ENCODE measurements at regions of chr2 and their contacts with region 1.

Region 1: GRCh38 chr2:11129598-11130449 is 25.4 kb upstream of the SLC66A3 start:
- DNase-seq: peak; percentile 76 to 97
- H3K4me3 ChIP-seq: peak overlapping the region; percentile 32 to 56 (median 46); a peak in 7 of 8 replicates
- H3K27ac ChIP-seq: no peak overlapping the region
- H3K4me1 ChIP-seq: peaks cover 3 to 11% (median 6%) of the 10 kb centered on the region in 4 experiments
- H3K27me3 ChIP-seq: no peaks in the 10 kb centered on the region; a peak in 2 of 7 replicates
- CTCF ChIP-seq: peak; percentile 58 to 72 (median 67)
- EP300 ChIP-seq: peak in 1 of 2 experiments; percentile 54; a peak in 1 of 3 replicates
- POLR2A ChIP-seq: no peak
- RAD21 ChIP-seq: peak; percentile 74 to 80

Region 2: GRCh38 chr2:11103984-11104793 is 25.6 kb before region 1 on chr2:
- CTCF ChIA-PET with region 1: interaction called, 84 read pairs
- POLR2A ChIA-PET with region 1: no interaction called
- DNase-seq: no peak
- H3K4me3 ChIP-seq: no peak overlapping the region
- H3K27ac ChIP-seq: no peak overlapping the region
- H3K4me1 ChIP-seq: no peaks in the 10 kb centered on the region
- H3K27me3 ChIP-seq: no peaks in the 10 kb centered on the region
- CTCF ChIP-seq: no peak
- EP300 ChIP-seq: no peak
- POLR2A ChIP-seq: no peak
- RAD21 ChIP-seq: no peak

Region 3: DNA sequence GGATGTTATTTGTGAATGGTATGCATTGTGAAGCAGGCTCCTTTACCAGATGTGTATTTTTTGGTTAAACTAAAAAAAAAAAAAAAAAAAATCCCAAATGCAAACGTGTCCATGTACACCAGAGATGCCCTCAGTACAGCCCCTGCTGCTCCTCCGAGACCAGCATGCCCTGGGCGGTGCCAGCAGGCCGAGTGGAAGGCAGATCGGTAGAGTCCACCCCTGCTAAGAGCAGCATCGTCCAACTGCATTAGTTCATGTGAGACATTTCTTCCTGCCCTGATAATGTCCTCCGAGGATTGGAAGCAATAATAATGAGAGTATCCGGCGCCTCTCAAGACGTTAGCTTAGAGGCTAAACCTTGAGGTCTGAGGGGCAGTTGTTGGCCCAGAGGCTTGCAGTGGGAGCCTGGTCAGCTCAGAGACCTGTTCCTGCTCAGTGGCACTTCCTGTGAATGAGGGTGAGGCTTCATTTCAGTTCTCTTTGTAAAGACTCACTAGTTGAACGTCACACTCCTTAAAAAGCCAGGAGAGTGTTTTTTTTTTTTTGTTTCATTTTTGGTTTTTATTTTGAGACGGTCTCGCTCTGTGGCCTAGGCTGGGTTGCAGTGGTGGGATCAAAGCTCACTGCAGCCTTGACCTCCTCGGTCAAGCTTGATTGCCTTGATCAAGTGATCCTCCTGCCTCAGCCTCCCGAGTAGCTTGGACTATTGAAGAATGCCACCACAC is 31.1 kb after region 1 on chr2:
- CTCF ChIA-PET with region 1: interaction called, 111 read pairs
- POLR2A ChIA-PET with region 1: interaction called, 20 read pairs
- DNase-seq: no peak
- H3K4me3 ChIP-seq: no peak overlapping the region
- H3K27ac ChIP-seq: no peak overlapping the region
- H3K4me1 ChIP-seq: peaks cover 0 to under 1% (median 0%) of the 10 kb centered on the region in 4 experiments; a peak in 1 of 7 replicates
- H3K27me3 ChIP-seq: peaks cover 0 to 5% (median 2%) of the 10 kb centered on the region in 4 experiments; a peak in 3 of 7 replicates
- CTCF ChIP-seq: no peak
- EP300 ChIP-seq: no peak
- POLR2A ChIP-seq: no peak
- RAD21 ChIP-seq: no peak

Region 4: GRCh38 chr2:11398747-11399437 is 269.1 kb after region 1 on chr2:
- CTCF ChIA-PET with region 1: interaction called, 21 read pairs
- POLR2A ChIA-PET with region 1: no interaction called
- DNase-seq: no peak
- H3K4me3 ChIP-seq: no peak overlapping the region
- H3K27ac ChIP-seq: no peak overlapping the region
- H3K4me1 ChIP-seq: peaks cover 0 to 5% (median 0%) of the 10 kb centered on the region in 4 experiments; a peak in 2 of 7 replicates
- H3K27me3 ChIP-seq: no peaks in the 10 kb centered on the region
- CTCF ChIP-seq: no peak
- EP300 ChIP-seq: no peak
- POLR2A ChIP-seq: no peak
- RAD21 ChIP-seq: no peak

Region 5: DNA sequence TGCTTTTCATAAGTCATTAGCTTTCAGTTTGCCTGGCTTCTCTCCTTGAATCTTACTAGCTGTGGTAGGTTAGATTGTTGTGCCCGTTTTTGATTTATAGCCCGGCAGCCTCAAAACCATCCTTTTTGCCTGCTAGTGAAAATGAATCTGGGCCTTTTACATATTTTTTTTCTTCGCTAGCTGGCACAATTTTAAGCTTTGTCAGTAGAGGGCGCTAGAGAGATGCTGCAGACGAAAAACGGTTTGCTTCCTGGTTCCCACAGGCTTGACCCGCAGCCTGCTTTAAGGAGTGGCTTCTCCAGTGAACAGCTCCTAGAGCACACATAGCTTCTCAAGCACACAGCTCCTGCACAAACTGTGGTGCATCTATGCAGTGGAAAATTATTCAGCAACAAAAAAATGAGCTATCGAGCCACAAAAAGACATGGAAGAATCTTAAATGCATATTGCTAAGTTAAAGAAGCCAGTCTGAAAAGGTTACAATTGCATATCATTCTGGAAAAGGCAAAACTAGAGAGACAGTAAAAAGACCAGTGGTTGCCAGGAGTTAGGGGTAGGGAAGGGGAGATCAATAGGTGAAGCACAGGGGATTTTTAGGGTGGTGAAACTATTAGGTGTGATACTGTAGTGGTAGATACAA is 288.2 kb after region 1 on chr2:
- CTCF ChIA-PET with region 1: interaction called, 54 read pairs
- POLR2A ChIA-PET with region 1: no interaction called
- DNase-seq: no peak
- H3K4me3 ChIP-seq: no peak overlapping the region
- H3K27ac ChIP-seq: no peak overlapping the region
- H3K4me1 ChIP-seq: no peaks in the 10 kb centered on the region
- H3K27me3 ChIP-seq: no peaks in the 10 kb centered on the region; a peak in 2 of 7 replicates
- CTCF ChIP-seq: peak; percentile 18 to 71 (median 53)
- EP300 ChIP-seq: no peak
- POLR2A ChIP-seq: no peak
- RAD21 ChIP-seq: peak; percentile 50 to 61